GM23248 (cell line): ENCODE measurements at regions of chr11 and their contacts with region 1.

Region 1: GRCh38 chr11:17722000-17722643 is 2.8 kb downstream of the MYOD1 start:
- DNase-seq: peak; percentile 56
- H3K4me3 ChIP-seq: no peak overlapping the region
- H3K27ac ChIP-seq: no peak overlapping the region
- H3K4me1 ChIP-seq: no peaks in the 10 kb centered on the region
- H3K27me3 ChIP-seq: peaks cover 72% of the 10 kb centered on the region

Region 2: GRCh38 chr11:17598700-17599459 is 123.2 kb before region 1 on chr11:
- in situ Hi-C with region 1: loop called (anchors 10 kb)
- DNase-seq: peak; percentile 75
- H3K4me3 ChIP-seq: no peak overlapping the region
- H3K27ac ChIP-seq: no peak overlapping the region
- H3K4me1 ChIP-seq: no peaks in the 10 kb centered on the region
- H3K27me3 ChIP-seq: no peaks in the 10 kb centered on the region